ENCODE measurements at regions of chr19 and their contacts with region 1.

Region 1: GRCh38 chr19:13794757-13795589 is at the start of gene ZSWIM4:
- DNase-seq: peak; percentile 100
- H3K4me3 Mint-ChIP-seq: peak within 1 kb of the TSS; percentile 95
- H3K27ac Mint-ChIP-seq: peak within 1 kb of the TSS; percentile 93
- H3K4me1 Mint-ChIP-seq: peaks cover 22% of the 10 kb centered on the region
- H3K27me3 Mint-ChIP-seq: no peaks in the 10 kb centered on the region
- CTCF ChIP-seq: no peak
- total RNA-seq, gene ZSWIM4: 9.2 and 9.4 TPM in 2 replicates

Region 2: DNA sequence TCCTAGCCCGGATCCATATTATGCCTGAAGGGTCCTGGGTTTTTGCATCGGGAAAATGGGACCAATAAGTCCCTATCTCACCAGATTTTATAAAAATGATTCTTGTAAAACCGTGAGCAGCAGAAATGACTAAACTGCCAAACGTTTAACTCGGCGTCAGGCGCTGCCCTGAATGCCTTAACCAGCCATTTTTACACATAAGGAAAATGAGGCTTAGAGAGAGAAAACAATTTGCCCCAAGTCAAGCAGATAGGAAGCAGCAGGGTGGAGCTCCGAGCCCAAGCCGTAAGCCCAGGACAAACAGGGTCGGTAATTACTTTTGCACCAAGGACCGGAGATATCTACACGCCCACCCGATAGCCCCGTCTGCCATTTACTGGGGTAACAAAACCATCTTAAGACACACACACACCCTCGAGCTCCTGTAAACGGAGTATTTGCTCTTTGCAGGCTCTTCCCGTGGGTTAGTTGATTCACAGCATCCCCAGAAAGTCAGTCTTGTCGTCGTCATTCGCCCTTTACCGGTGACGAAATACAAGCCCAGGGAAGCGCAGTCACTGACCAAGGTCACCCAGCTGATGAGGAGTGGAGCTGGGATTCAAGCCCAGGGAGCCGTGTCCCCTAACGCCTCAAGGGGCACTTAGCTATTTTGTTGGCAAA is 46.7 kb before region 1 on chr19:
- CTCF ChIA-PET with region 1: no interaction called
- POLR2A ChIA-PET with region 1: interaction called, 10 read pairs
- intact Hi-C with region 1: no loop called
- DNase-seq: peak; percentile 27
- H3K4me3 Mint-ChIP-seq: peak overlapping the region; percentile 89
- H3K27ac Mint-ChIP-seq: peak overlapping the region; percentile 90
- H3K4me1 Mint-ChIP-seq: peaks cover 12% of the 10 kb centered on the region
- H3K27me3 Mint-ChIP-seq: no peaks in the 10 kb centered on the region
- CTCF ChIP-seq: no peak

Region 3: GRCh38 chr19:13784731-13785452 is 10.1 kb before region 1 on chr19:
- CTCF ChIA-PET with region 1: interaction called, 6 read pairs
- POLR2A ChIA-PET with region 1: interaction called, 12 read pairs
- intact Hi-C with region 1: no loop called
- DNase-seq: peak; percentile 78
- H3K4me3 Mint-ChIP-seq: no peak overlapping the region
- H3K27ac Mint-ChIP-seq: no peak overlapping the region
- H3K4me1 Mint-ChIP-seq: peaks cover 14% of the 10 kb centered on the region
- H3K27me3 Mint-ChIP-seq: no peaks in the 10 kb centered on the region
- CTCF ChIP-seq: peak; percentile 77

Region 4: DNA sequence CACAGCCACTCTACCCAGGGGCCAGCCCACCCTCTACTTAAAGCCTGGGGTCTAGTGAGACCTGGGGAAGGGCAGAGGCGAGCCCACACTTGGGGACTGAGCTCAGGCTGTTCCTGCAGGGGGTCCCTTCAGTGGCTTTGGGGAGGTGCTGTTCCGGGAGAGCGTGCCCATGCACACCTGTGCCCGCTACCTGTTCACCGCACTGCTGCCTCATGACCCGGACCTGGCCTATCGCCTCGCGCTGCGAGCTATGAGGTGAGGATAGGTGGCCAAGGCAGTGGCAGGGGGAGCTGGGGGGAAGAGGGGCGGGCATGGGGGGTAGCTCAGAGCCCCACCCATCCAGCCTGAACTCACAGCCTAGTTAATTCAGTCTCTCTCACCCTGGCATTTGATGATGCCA is 24.3 kb after region 1 on chr19:
- CTCF ChIA-PET with region 1: interaction called, 3 read pairs
- POLR2A ChIA-PET with region 1: interaction called, 22 read pairs
- intact Hi-C with region 1: no loop called
- DNase-seq: no peak
- H3K4me3 Mint-ChIP-seq: no peak overlapping the region
- H3K27ac Mint-ChIP-seq: no peak overlapping the region
- H3K4me1 Mint-ChIP-seq: peaks cover 17% of the 10 kb centered on the region
- H3K27me3 Mint-ChIP-seq: no peaks in the 10 kb centered on the region
- CTCF ChIP-seq: no peak

Region 5: DNA sequence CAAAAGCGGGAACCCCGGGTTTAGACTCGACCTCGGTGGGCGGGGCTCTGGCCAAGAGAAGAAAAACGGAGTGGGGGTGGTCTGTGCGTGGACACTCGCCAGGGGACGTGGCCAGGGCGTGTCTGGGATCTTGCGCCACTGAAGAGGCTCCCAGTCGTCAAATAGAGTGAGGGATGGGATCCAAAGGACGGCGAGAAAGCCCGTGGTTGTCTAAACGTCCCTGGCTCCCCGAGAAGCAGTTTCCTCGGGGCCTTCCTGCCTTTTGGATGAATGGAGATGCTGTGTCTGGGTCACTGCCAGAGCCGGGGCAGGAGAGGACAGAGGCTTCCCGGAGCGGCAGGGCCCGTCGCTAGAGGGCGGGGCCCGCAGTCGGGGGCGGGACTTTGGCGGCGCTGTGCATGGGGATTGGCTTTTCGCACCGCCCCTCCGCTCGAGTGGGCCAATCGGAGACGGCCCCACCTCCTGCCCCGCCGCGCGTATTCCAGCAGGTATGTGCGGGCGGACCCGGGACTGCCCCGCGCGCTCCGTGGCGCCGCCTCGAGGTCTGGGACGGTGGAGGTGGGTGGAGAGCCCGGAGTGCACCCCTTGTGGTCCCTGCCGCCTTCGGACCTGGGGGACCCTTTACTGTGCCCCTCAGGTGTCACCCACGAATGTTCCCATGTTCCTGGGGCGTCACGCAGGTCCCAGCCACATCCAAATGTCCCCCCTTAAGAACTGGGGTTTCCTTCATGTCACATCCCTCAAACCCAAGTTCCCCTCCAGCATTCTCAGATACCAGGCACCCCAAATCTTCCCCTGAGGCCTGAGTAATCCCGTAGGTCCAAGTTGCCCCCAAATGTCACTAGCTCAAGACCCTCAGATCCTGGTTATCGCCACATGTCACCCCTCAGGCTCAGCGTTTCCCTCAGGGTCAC is 38.6 kb after region 1 on chr19:
- CTCF ChIA-PET with region 1: interaction called, 4 read pairs
- POLR2A ChIA-PET with region 1: interaction called, 98 read pairs
- intact Hi-C with region 1: loop called (anchors 1 kb)
- DNase-seq: peak; percentile 94
- H3K4me3 Mint-ChIP-seq: peak overlapping the region; percentile 46
- H3K27ac Mint-ChIP-seq: peak overlapping the region; percentile 75
- H3K4me1 Mint-ChIP-seq: peaks cover 7% of the 10 kb centered on the region
- H3K27me3 Mint-ChIP-seq: no peaks in the 10 kb centered on the region
- CTCF ChIP-seq: peak; percentile 29

Region 6: GRCh38 chr19:13839130-13839937 is 44.4 kb after region 1 on chr19:
- CTCF ChIA-PET with region 1: no interaction called
- POLR2A ChIA-PET with region 1: interaction called, 98 read pairs
- intact Hi-C with region 1: no loop called
- DNase-seq: peak; percentile 94
- H3K4me3 Mint-ChIP-seq: peak overlapping the region; percentile 96
- H3K27ac Mint-ChIP-seq: peak overlapping the region; percentile 95
- H3K4me1 Mint-ChIP-seq: peaks cover 16% of the 10 kb centered on the region
- H3K27me3 Mint-ChIP-seq: no peaks in the 10 kb centered on the region
- CTCF ChIP-seq: no peak

Region 7: DNA sequence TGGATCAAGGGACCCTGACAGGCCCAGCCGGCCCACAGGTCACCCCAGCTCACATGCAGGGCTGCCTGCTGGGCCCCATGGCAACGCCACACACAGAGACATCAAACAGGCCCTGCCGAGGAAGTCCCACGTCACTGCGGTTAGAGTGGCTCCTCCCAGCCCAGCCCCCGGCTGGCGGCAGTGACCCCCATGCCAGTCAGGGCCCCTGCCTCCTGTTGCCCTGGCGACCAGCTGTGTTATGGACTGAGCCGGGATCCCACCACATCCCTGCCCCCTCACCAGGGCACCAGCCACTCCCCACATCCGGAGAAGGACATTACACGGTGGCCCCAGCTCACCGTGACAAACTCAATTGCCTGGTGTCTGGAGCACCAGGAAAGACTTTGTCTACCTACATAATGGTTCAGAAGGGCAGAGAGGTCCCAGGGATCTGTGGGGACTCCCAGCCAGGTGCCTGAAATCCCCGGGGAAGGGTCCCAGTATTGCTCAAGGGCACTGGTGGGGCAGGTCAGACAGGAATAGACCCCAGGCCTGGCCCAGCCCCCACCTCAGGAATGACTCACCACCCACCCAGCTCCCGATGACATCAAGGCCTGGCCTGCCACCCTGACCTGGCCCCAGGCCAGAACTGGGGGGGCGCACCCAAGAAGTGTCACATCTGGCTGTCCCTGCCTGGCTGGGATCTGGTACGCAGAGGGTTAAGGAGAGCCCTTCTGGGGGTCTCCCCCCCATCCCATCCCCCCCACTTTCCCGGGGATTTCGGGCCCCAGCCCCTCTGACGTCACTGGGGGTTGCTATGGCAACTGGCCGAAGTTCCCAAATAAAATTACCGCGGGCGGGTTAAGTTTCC is 51.8 kb after region 1 on chr19:
- CTCF ChIA-PET with region 1: interaction called, 4 read pairs
- POLR2A ChIA-PET with region 1: interaction called, 98 read pairs
- intact Hi-C with region 1: no loop called
- DNase-seq: peak; percentile 93
- H3K4me3 Mint-ChIP-seq: peak overlapping the region; percentile 58
- H3K27ac Mint-ChIP-seq: peak overlapping the region; percentile 100
- H3K4me1 Mint-ChIP-seq: peaks cover 30% of the 10 kb centered on the region
- H3K27me3 Mint-ChIP-seq: no peaks in the 10 kb centered on the region
- CTCF ChIP-seq: no peak

Measured in MCF 10A (cell line).